ENCODE measurements at regions of chr16 and their contacts with region 1.

Region 1: GRCh38 chr16:2919511-2920255 is 8.0 kb downstream of the FLYWCH1 start:
- DNase-seq: peak; percentile 38 to 84 (median 67)
- ATAC-seq: peak; percentile 86
- H3K4me3 ChIP-seq: no peak overlapping the region
- H3K4me3 Mint-ChIP-seq: no peak overlapping the region
- H3K27ac ChIP-seq: no peak overlapping the region
- H3K27ac Mint-ChIP-seq: no peak overlapping the region
- H3K4me1 ChIP-seq: no peaks in the 10 kb centered on the region
- H3K4me1 Mint-ChIP-seq: peaks cover 5% of the 10 kb centered on the region
- H3K27me3 ChIP-seq: no peaks in the 10 kb centered on the region
- H3K27me3 Mint-ChIP-seq: no peaks in the 10 kb centered on the region
- CTCF ChIP-seq: peak; percentile 96

Region 2: GRCh38 chr16:2838928-2839327 is 80.8 kb before region 1 on chr16:
- CTCF ChIA-PET with region 1: interaction called, 16 read pairs
- POLR2A ChIA-PET with region 1: no interaction called
- intact Hi-C with region 1: loop called (anchors 1 to 2 kb)
- DNase-seq: peak; percentile 34 to 80 (median 63)
- ATAC-seq: peak; percentile 76
- H3K4me3 ChIP-seq: no peak overlapping the region
- H3K4me3 Mint-ChIP-seq: no peak overlapping the region
- H3K27ac ChIP-seq: no peak overlapping the region
- H3K27ac Mint-ChIP-seq: peak overlapping the region; percentile 64
- H3K4me1 ChIP-seq: peaks cover 49% of the 10 kb centered on the region
- H3K4me1 Mint-ChIP-seq: peaks cover 35% of the 10 kb centered on the region
- H3K27me3 ChIP-seq: peaks cover 0 to 4% of the 10 kb centered on the region in 2 experiments
- H3K27me3 Mint-ChIP-seq: peaks cover 10% of the 10 kb centered on the region
- CTCF ChIP-seq: peak; percentile 63

Region 3: DNA sequence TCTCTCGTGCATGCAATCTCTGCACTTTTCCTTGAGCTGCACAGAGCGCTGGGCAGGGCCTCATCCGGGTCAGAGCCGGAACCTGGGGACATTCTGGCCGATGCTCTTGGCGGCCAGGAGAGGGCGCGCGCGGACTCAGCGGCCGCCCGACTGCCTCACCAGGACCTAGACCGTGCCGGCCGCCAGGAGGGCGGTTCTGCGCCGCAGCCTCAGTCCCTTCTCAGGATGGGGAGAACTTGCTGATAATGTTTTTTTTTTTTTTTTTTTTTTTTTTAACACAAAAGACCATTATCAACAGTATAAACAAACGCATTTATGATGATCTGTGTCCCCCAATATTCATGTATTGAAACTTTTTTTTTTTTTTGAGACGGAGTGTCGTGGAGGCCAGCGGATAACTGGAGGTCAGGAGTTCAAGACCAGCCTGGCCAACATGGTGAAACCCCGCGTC is 44.7 kb before region 1 on chr16:
- CTCF ChIA-PET with region 1: interaction called, 55 read pairs
- POLR2A ChIA-PET with region 1: no interaction called
- intact Hi-C with region 1: loop called (anchors 1 kb)
- DNase-seq: peak; percentile 37 to 86 (median 61)
- ATAC-seq: peak; percentile 100
- H3K4me3 ChIP-seq: no peak overlapping the region
- H3K4me3 Mint-ChIP-seq: no peak overlapping the region
- H3K27ac ChIP-seq: no peak overlapping the region
- H3K27ac Mint-ChIP-seq: no peak overlapping the region
- H3K4me1 ChIP-seq: no peaks in the 10 kb centered on the region
- H3K4me1 Mint-ChIP-seq: no peaks in the 10 kb centered on the region
- H3K27me3 ChIP-seq: no peaks in the 10 kb centered on the region
- H3K27me3 Mint-ChIP-seq: no peaks in the 10 kb centered on the region
- CTCF ChIP-seq: peak; percentile 98

Region 4: GRCh38 chr16:2883027-2883851 is 36.4 kb before region 1 on chr16 and contains the start of gene FLYWCH2:
- CTCF ChIA-PET with region 1: interaction called, 11 read pairs
- POLR2A ChIA-PET with region 1: no interaction called
- intact Hi-C with region 1: no loop called
- DNase-seq: peak; percentile 98 to 100 (median 99)
- ATAC-seq: peak; percentile 83
- H3K4me3 ChIP-seq: peak within 1 kb of the TSS; percentile 69 to 78
- H3K4me3 Mint-ChIP-seq: peak within 1 kb of the TSS; percentile 87
- H3K27ac ChIP-seq: peak within 1 kb of the TSS; percentile 90 to 94
- H3K27ac Mint-ChIP-seq: peak within 1 kb of the TSS; percentile 95
- H3K4me1 ChIP-seq: peaks cover 9% of the 10 kb centered on the region
- H3K4me1 Mint-ChIP-seq: peaks cover 17% of the 10 kb centered on the region
- H3K27me3 ChIP-seq: no peaks in the 10 kb centered on the region
- H3K27me3 Mint-ChIP-seq: no peaks in the 10 kb centered on the region
- CTCF ChIP-seq: no peak
- total RNA-seq, gene FLYWCH2: 9.3 to 10.9 TPM

Region 5: DNA sequence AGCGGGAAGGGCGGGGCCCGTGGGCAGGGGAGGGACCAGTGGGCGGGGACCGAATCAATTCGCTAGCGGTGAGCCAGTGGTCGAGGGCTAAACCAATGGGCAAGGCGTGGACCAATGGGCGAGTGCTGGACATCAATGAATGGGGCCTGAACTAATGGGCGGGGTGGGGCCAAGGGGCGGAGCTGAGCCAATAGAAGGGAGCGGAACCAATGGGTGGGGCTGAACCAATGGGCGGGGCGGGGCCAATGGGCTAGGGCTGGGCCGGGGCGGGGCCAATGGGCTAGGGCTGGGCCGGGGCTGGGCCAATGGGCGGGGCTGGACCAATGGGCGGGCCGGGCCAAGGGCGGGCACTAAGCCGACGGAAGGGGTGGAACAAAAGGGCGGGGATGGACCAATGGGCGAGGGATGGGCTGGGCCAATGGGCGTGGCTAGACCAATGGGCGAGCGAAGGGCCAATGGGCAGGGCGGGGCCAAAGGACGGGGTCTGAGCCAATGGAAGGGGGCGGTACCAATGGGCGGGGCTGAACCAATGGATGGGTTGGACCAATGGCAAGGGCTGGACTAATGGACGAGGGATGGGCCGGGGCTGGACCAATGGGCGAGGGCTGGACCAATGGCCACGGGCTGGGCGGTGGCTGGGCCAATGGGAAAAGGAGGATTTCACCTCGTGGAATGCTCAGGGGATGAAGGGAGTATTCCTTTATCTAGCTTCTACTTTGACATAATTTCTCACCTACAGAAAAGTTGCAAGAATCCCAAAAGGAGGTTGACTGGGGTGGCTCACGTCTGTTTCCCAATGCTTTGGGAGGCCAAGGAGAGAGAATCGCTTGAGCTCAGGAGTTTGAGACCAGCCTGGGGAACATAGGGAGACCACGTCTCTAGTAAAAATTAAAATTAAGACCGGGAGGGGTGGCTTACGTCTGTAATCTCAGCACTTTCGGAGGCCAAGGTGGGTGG is 14.0 kb before region 1 on chr16:
- CTCF ChIA-PET with region 1: interaction called, 23 read pairs
- POLR2A ChIA-PET with region 1: no interaction called
- intact Hi-C with region 1: loop called (anchors 1 kb)
- DNase-seq: peak; percentile 73 to 96 (median 85)
- ATAC-seq: peak; percentile 83
- H3K4me3 ChIP-seq: peak overlapping the region; percentile 86 to 88
- H3K4me3 Mint-ChIP-seq: peak overlapping the region; percentile 91
- H3K27ac ChIP-seq: peak overlapping the region in 1 of 2 experiments; percentile 22
- H3K27ac Mint-ChIP-seq: peak overlapping the region; percentile 55
- H3K4me1 ChIP-seq: peaks cover 11% of the 10 kb centered on the region
- H3K4me1 Mint-ChIP-seq: peaks cover 23% of the 10 kb centered on the region
- H3K27me3 ChIP-seq: peaks cover 0 to 2% of the 10 kb centered on the region in 2 experiments
- H3K27me3 Mint-ChIP-seq: no peaks in the 10 kb centered on the region
- CTCF ChIP-seq: no peak